ENCODE measurements at regions of chr17 and their contacts with region 1.

Region 1: DNA sequence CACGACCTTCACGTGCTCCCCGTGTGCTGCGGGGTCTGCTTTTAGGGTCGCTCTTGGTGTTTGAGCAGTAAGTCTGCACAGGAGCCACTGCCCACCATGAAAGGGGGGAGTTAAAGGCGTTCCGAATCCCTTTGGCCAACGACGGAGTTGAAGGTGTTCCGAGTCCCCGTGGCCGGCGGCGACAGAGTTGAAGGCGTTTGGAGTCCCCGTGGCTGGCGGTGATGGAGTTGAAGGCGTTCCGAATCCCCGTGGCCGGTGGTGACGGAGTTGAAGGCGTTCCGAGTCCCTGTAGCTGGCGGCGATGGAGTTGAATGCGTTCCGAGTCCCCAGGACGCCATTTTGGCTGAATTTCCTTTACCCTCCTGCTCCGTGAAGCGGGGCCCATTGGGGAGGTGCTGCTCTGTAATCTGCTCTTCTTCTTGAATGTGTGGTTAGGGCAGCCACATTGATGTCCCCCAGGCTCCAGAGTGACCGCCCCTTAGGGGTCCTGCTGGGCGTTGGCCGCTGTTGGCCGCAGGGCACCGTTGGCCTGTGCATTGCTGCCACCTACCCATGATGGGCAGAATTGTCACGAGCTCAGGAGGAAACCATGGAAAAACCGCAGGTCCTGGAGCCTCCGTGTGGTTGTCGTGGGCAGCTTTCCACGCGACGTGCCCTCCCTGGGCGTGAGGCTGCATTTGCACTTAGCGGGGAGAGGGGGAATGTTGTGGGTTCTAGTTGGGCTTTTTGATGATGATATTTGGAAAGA is 73.6 kb upstream of the ZNF750 start:
- DNase-seq: no peak
- H3K4me3 ChIP-seq: no peak overlapping the region
- H3K27ac ChIP-seq: no peak overlapping the region
- H3K4me1 ChIP-seq: no peaks in the 10 kb centered on the region
- H3K27me3 ChIP-seq: no peaks in the 10 kb centered on the region
- CTCF ChIP-seq: peak; percentile 8 to 46

Region 2: GRCh38 chr17:82781894-82782274 is 131.6 kb before region 1 on chr17:
- CTCF ChIA-PET with region 1: interaction called, 4 read pairs
- dilution Hi-C with region 1: no loop called
- in situ Hi-C with region 1: no loop called
- intact Hi-C with region 1: loop called (anchors 1 kb)
- DNase-seq: peak; percentile 62
- H3K4me3 ChIP-seq: no peak overlapping the region
- H3K27ac ChIP-seq: no peak overlapping the region
- H3K4me1 ChIP-seq: peaks cover 6% of the 10 kb centered on the region
- H3K27me3 ChIP-seq: no peaks in the 10 kb centered on the region
- CTCF ChIP-seq: peak; percentile 91 to 100

Region 3: DNA sequence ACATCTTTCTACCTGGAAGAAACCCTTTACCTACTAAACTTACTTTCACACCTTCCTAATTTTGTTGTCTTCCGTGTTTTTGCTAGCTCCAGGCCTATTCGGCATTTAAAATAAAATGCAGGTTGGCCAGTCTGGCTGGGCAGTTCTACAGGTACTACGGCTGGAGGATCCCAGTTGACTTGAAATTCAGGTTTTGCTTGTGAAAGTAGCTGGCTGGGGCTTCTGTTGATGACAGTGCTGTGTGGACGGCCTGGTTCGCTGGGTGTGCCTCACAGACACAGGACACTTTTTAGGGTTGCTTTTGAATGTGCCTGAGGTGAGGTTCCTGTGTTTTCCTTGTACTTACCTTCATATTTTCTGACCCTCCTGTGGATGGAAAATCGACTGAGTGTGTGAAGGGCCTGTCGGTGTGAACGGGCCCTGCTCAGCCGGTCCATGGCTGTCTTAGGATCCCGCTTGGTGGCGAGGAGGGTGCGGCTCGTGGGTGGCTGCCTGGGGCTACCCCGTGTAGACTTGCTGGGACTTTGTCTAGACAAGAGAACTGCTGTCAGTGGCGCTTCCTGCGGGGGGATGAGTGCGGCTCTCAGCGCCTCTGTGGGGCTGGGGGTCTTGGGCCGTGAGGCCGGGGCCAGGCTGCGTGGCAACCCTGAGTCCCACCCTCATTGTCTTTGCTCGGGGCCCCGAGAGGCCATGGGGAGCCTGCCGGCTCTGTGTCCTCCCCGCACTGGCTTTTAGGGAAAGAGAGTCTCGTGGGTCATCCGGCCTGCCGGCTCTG is 54.9 kb before region 1 on chr17:
- CTCF ChIA-PET with region 1: no interaction called
- dilution Hi-C with region 1: no loop called
- in situ Hi-C with region 1: no loop called
- intact Hi-C with region 1: no loop called
- DNase-seq: peak; percentile 87
- H3K4me3 ChIP-seq: no peak overlapping the region
- H3K27ac ChIP-seq: peak overlapping the region; percentile 83
- H3K4me1 ChIP-seq: peaks cover 26% of the 10 kb centered on the region
- H3K27me3 ChIP-seq: no peaks in the 10 kb centered on the region
- CTCF ChIP-seq: no peak